Natural killer cell (primary cell): ENCODE measurements at regions of chr2 and their contacts with region 1.

Region 1: GRCh38 chr2:157420771-157421323 is 23.0 kb downstream of the CYTIP start:
- DNase-seq: peak in 1 of 2 donors; percentile 60
- ATAC-seq: peak; percentile 54 to 82 (median 60)
- H3K4me3 ChIP-seq: no peak overlapping the region
- H3K4me3 Mint-ChIP-seq: peak overlapping the region; percentile 70
- H3K27ac ChIP-seq: peak overlapping the region; percentile 92
- H3K27ac Mint-ChIP-seq: peak overlapping the region; percentile 92 to 94
- H3K4me1 ChIP-seq: peaks cover 39% of the 10 kb centered on the region
- H3K4me1 Mint-ChIP-seq: peaks cover 62 to 63% of the 10 kb centered on the region in 2 donors
- H3K27me3 ChIP-seq: no peaks in the 10 kb centered on the region
- H3K27me3 Mint-ChIP-seq: no peaks in the 10 kb centered on the region
- CTCF ChIP-seq: no peak

Region 2: DNA sequence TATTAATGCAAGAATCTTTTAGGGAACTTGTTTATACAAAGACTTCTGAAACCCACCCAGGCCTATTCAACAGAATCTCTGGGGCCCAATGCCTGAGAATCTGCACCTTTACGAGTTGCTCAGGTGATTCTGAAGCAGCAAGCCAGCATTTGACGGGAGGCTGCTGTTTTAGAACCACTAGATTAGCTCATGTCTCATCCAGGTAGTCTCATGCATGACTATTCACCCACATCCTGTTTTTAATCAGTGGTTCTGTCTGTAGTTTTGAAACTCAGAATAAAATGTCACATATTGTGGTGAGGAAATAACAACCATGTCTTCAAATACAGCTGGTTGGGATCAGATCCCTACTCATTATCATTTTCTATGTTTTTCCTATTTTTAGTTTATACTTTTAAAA is 16.5 kb before region 1 on chr2:
- intact Hi-C with region 1: loop called (anchors 1 kb)
- DNase-seq: peak in 1 of 2 donors; percentile 90
- ATAC-seq: peak; percentile 91 to 98 (median 94)
- H3K4me3 ChIP-seq: no peak overlapping the region
- H3K4me3 Mint-ChIP-seq: peak overlapping the region; percentile 71
- H3K27ac ChIP-seq: peak overlapping the region; percentile 81
- H3K27ac Mint-ChIP-seq: peak overlapping the region; percentile 77 to 86
- H3K4me1 ChIP-seq: peaks cover 26% of the 10 kb centered on the region
- H3K4me1 Mint-ChIP-seq: peaks cover 51 to 56% of the 10 kb centered on the region in 2 donors
- H3K27me3 ChIP-seq: no peaks in the 10 kb centered on the region
- H3K27me3 Mint-ChIP-seq: no peaks in the 10 kb centered on the region
- CTCF ChIP-seq: no peak

Region 3: GRCh38 chr2:157433394-157433793 is 12.5 kb after region 1 on chr2:
- intact Hi-C with region 1: loop called (anchors 2 kb)
- DNase-seq: no peak
- ATAC-seq: peak in 1 of 3 donors; percentile 11
- H3K4me3 ChIP-seq: no peak overlapping the region
- H3K4me3 Mint-ChIP-seq: peak overlapping the region; percentile 75
- H3K27ac ChIP-seq: peak overlapping the region; percentile 66
- H3K27ac Mint-ChIP-seq: peak overlapping the region; percentile 92 to 94
- H3K4me1 ChIP-seq: peaks cover 16% of the 10 kb centered on the region
- H3K4me1 Mint-ChIP-seq: peaks cover 95 to 96% of the 10 kb centered on the region in 2 donors
- H3K27me3 ChIP-seq: no peaks in the 10 kb centered on the region
- H3K27me3 Mint-ChIP-seq: no peaks in the 10 kb centered on the region
- CTCF ChIP-seq: no peak